MCF 10A (cell line): ENCODE measurements at regions of chr16 and their contacts with region 1.

Region 1: GRCh38 chr16:1964506-1965395 is at the start of gene RPS2:
- DNase-seq: peak; percentile 98
- H3K4me3 Mint-ChIP-seq: peak within 1 kb of the TSS; percentile 78
- H3K27ac Mint-ChIP-seq: peak within 1 kb of the TSS; percentile 95
- H3K4me1 Mint-ChIP-seq: peaks cover 23% of the 10 kb centered on the region
- H3K27me3 Mint-ChIP-seq: no peaks in the 10 kb centered on the region
- CTCF ChIP-seq: no peak
- total RNA-seq, gene RPS2: 4,760 and 4,836 TPM in 2 replicates

Region 2: DNA sequence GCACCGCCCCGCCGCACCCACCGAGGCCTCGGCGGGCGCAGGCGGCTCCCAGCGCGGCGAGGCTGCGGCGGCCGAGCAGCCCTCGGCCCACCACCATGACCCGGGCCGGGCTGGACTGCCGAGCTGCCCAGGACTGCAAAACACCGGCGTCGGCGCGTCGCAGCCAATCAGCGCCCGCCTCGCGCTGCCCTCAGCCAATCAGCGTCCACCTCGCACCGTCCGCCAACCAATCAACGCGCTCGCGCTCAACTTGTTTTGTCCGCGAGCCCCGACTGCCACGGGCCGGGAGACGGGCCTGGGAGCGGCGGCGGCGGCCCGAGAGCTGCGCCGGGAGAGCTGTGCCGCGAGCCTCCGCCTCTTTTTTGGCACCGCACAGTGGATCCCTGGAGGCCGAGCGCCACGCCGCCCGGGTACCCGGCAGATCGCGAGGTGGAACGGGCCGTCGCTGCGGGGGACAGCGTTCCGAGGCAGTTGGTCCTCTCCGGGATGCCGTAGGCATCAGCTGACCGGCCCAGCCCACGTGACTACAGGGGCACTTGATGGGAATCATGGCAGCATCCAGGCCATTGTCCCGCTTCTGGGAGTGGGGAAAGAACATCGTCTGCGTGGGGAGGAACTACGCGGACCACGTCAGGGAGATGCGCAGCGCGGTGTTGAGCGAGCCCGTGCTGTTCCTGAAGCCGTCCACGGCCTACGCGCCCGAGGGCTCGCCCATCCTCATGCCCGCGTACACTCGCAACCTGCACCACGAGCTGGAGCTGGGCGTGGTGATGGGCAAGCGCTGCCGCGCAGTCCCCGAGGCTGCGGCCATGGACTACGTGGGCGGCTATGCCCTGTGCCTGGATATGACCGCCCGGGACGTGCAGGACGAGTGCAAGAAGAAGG is 137.8 kb before region 1 on chr16 and contains the starts of genes FAHD1 and HAGH:
- CTCF ChIA-PET with region 1: no interaction called
- POLR2A ChIA-PET with region 1: interaction called, 30 read pairs
- intact Hi-C with region 1: no loop called
- DNase-seq: peak; percentile 89
- H3K4me3 Mint-ChIP-seq: peak within 1 kb of the TSS; percentile 94
- H3K27ac Mint-ChIP-seq: peak within 1 kb of the TSS; percentile 92
- H3K4me1 Mint-ChIP-seq: peaks cover 7% of the 10 kb centered on the region
- H3K27me3 Mint-ChIP-seq: no peaks in the 10 kb centered on the region
- CTCF ChIP-seq: no peak
- total RNA-seq, gene FAHD1: 18.4 and 21.4 TPM in 2 replicates
- total RNA-seq, gene HAGH: 44.5 and 69.8 TPM in 2 replicates

Region 3: DNA sequence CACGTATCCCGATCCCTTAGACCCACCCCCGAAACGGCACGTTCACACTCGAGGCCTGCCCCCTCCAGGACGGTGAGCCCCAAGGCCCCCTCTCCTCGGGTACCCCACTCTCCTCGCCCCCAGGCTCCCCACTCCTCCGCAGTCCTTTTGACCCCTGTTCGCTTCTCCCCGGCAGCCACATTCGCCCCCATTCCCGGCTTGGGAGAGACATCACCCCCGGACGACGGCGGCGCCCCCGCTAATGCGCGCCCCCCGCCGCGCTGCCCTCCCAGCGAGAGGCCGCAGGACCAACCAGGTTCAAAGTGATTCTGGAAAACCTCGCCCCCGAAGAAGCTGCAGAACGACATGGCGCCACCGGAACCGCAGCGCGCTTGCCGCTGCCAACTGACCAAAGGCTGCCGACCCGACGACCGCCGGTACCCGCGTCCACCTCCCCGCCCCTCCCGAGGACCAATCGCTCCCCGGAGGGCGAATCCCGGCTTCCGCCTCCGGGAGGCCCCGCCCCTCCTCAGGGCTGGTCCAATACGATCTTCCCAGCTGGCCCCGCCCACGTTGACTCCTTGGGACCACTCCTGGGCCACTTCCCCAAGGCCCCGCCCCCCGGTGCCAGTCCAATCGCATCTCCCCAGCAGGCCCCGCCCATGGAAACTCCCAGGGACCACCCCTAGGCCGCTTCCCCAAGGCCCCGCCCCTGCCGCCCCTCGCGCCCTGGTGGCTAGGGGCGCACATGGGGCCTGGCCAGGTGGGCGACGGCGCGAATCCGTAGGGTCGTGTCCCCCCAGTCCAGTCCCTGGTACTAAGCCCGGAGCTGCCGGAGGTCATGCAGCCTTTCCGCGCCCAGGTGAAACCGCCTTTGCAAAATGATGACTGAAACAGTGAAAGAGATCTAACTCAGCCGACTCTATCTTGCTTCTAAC is 21.7 kb before region 1 on chr16 and contains the start of gene MSRB1:
- CTCF ChIA-PET with region 1: no interaction called
- POLR2A ChIA-PET with region 1: interaction called, 33 read pairs
- intact Hi-C with region 1: no loop called
- DNase-seq: peak; percentile 99
- H3K4me3 Mint-ChIP-seq: peak within 1 kb of the TSS; percentile 87
- H3K27ac Mint-ChIP-seq: peak within 1 kb of the TSS; percentile 42
- H3K4me1 Mint-ChIP-seq: peaks cover 5% of the 10 kb centered on the region
- H3K27me3 Mint-ChIP-seq: no peaks in the 10 kb centered on the region
- CTCF ChIP-seq: no peak
- total RNA-seq, gene MSRB1: 5.8 and 7.4 TPM in 2 replicates

Region 4: GRCh38 chr16:1983544-1984346 is 19.0 kb after region 1 on chr16 and contains the start of gene GFER:
- CTCF ChIA-PET with region 1: no interaction called
- POLR2A ChIA-PET with region 1: interaction called, 56 read pairs
- intact Hi-C with region 1: no loop called
- DNase-seq: peak; percentile 82
- H3K4me3 Mint-ChIP-seq: peak within 1 kb of the TSS; percentile 76
- H3K27ac Mint-ChIP-seq: no peak within 1 kb of the TSS
- H3K4me1 Mint-ChIP-seq: peaks cover 10% of the 10 kb centered on the region
- H3K27me3 Mint-ChIP-seq: no peaks in the 10 kb centered on the region
- CTCF ChIP-seq: no peak
- total RNA-seq, gene GFER: 34.6 and 40.8 TPM in 2 replicates

Region 5: DNA sequence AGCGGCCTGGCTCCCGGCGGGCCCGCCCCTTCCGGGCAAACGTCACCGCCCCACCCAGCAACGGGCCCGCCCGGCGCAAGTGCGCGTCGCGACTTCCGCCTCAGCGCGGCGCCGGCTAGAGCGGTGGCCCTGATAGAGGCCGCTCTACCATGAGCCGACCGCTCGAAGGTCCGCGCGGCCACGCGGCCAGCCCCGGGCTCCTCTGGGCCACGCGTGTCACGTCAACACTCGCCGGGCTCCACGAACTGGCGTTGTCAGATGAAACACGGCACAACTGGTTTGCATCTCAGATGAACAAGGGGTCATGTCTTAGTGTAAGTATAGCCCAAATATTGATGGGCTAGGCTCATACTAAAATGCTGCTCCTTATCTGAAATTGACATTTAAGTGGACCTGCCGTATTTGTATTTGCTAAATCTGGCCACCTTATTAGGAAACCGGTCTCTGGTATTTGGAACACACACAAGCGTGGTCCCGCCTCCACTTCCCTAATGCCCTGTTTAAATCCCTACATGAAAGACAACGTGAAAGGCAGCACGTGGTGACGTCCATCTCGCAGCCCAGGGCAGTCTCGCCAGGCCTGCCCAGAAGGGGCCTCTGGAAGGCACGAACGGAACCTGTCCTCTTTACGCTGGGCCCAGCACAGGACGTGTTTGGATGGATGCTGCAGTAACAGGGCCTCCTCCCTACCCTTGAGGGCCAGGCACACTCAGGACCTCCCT is 45.2 kb after region 1 on chr16 and contains the start of gene ZNF598:
- CTCF ChIA-PET with region 1: interaction called, 3 read pairs
- POLR2A ChIA-PET with region 1: interaction called, 72 read pairs
- intact Hi-C with region 1: no loop called
- DNase-seq: peak; percentile 86
- H3K4me3 Mint-ChIP-seq: peak within 1 kb of the TSS; percentile 79
- H3K27ac Mint-ChIP-seq: peak within 1 kb of the TSS; percentile 97
- H3K4me1 Mint-ChIP-seq: peaks cover 17% of the 10 kb centered on the region
- H3K27me3 Mint-ChIP-seq: no peaks in the 10 kb centered on the region
- CTCF ChIP-seq: no peak
- total RNA-seq, gene ZNF598: 177 and 252 TPM in 2 replicates

Region 6: GRCh38 chr16:2047330-2048115 is 82.8 kb after region 1 on chr16 and contains the starts of genes NTHL1 and TSC2:
- CTCF ChIA-PET with region 1: no interaction called
- POLR2A ChIA-PET with region 1: interaction called, 13 read pairs
- intact Hi-C with region 1: no loop called
- DNase-seq: peak; percentile 95
- H3K4me3 Mint-ChIP-seq: peak within 1 kb of the TSS; percentile 86
- H3K27ac Mint-ChIP-seq: peak within 1 kb of the TSS; percentile 63
- H3K4me1 Mint-ChIP-seq: peaks cover 23% of the 10 kb centered on the region
- H3K27me3 Mint-ChIP-seq: no peaks in the 10 kb centered on the region
- CTCF ChIP-seq: peak; percentile 39
- total RNA-seq, gene NTHL1: 16.4 and 17.7 TPM in 2 replicates
- total RNA-seq, gene TSC2: 99.8 and 136 TPM in 2 replicates

Region 7: GRCh38 chr16:2308089-2308962 is 343.6 kb after region 1 on chr16:
- CTCF ChIA-PET with region 1: no interaction called
- POLR2A ChIA-PET with region 1: no interaction called
- intact Hi-C with region 1: no loop called
- DNase-seq: no peak
- H3K4me3 Mint-ChIP-seq: no peak overlapping the region
- H3K27ac Mint-ChIP-seq: no peak overlapping the region
- H3K4me1 Mint-ChIP-seq: no peaks in the 10 kb centered on the region
- H3K27me3 Mint-ChIP-seq: peaks cover 14% of the 10 kb centered on the region
- CTCF ChIP-seq: no peak

Region 8: DNA sequence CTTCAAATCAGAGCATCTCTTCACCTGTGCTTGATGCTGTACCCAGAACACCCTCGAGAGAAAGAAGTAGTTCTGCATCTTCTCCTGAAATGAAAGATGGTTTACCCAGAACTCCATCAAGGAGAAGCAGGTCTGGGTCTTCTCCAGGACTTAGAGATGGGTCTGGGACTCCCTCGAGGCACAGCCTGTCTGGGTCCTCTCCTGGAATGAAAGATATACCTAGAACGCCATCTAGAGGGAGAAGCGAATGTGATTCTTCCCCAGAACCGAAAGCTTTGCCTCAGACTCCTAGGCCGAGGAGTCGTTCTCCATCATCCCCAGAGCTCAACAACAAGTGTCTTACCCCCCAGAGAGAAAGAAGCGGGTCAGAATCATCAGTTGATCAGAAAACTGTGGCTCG is 800.0 kb after region 1 on chr16:
- CTCF ChIA-PET with region 1: no interaction called
- POLR2A ChIA-PET with region 1: no interaction called
- intact Hi-C with region 1: no loop called
- DNase-seq: no peak
- H3K4me3 Mint-ChIP-seq: no peak overlapping the region
- H3K27ac Mint-ChIP-seq: no peak overlapping the region
- H3K4me1 Mint-ChIP-seq: peaks cover 31% of the 10 kb centered on the region
- H3K27me3 Mint-ChIP-seq: no peaks in the 10 kb centered on the region
- CTCF ChIP-seq: no peak